OCI-LY7 (cell line): ENCODE measurements at regions of chr17 and their contacts with region 1.

Region 1: GRCh38 chr17:74493381-74493833 is 27.0 kb downstream of the CD300A start:
- DNase-seq: peak; percentile 80
- H3K4me3 ChIP-seq: no peak overlapping the region
- H3K27ac ChIP-seq: no peak overlapping the region
- H3K4me1 ChIP-seq: no peaks in the 10 kb centered on the region
- CTCF ChIP-seq: peak; percentile 99

Region 2: DNA sequence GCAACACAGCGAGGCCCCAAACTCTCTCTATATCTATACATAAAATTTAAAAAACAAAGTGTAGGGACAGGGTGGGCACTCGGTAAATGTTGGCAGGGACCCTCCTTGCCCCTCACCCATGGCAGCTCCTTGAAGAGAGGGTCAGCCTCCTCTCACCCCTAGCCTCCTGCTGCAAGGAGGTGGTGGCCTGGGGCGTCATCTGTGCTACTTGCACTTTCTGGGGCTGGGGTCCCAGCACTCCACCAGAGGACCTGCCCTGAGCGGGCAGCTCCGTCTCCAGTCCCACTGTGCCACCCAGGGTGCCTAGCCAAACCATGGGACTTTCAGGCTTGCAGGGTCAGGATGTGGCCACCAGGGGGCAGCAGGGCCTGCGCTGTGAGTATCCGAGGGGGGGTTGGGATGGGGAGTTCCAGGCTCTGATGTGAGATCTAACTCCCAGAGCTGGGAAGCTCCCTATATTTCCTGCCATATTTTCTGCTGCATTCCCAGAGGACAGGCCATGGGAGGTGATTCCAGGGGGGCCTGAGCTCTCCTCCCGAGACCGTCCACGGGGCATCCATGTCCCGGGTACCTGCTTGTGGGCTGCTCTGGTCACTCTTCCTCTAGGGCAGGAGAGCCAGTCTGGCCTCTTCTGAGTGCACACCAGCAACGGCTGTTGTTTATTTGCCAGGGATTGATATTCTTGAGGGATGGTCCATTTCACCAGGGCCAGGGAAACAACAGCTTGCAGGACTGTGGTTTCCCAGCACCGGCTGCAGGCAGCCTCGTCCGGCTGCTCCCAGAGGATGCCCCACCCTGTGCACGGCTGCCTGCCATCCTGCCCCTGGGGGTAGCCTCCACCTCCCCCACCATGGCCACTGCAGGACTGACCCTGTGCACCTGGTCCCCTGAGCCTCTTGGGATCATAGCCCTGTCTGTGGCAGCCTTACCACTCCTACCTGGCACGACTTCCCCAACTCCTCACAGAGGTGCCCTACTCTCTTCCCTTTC is 125.0 kb before region 1 on chr17:
- CTCF ChIA-PET with region 1: interaction called, 3 read pairs
- POLR2A ChIA-PET with region 1: no interaction called
- intact Hi-C with region 1: loop called (anchors 1 kb)
- DNase-seq: peak; percentile 71
- H3K4me3 ChIP-seq: no peak overlapping the region
- H3K27ac ChIP-seq: no peak overlapping the region
- H3K4me1 ChIP-seq: peaks cover 6% of the 10 kb centered on the region
- CTCF ChIP-seq: peak; percentile 99

Region 3: GRCh38 chr17:74379495-74380085 is 113.8 kb before region 1 on chr17:
- CTCF ChIA-PET with region 1: no interaction called
- POLR2A ChIA-PET with region 1: interaction called, 3 read pairs
- intact Hi-C with region 1: loop called (anchors 1 kb)
- DNase-seq: peak; percentile 88
- H3K4me3 ChIP-seq: no peak overlapping the region
- H3K27ac ChIP-seq: no peak overlapping the region
- H3K4me1 ChIP-seq: peaks cover 7% of the 10 kb centered on the region
- CTCF ChIP-seq: peak; percentile 99

Region 4: GRCh38 chr17:74437702-74438101 is 55.7 kb before region 1 on chr17:
- CTCF ChIA-PET with region 1: no interaction called
- POLR2A ChIA-PET with region 1: no interaction called
- intact Hi-C with region 1: loop called (anchors 1 kb)
- DNase-seq: peak; percentile 69
- H3K4me3 ChIP-seq: no peak overlapping the region
- H3K27ac ChIP-seq: no peak overlapping the region
- H3K4me1 ChIP-seq: peaks cover 6% of the 10 kb centered on the region
- CTCF ChIP-seq: peak; percentile 100

Region 5: GRCh38 chr17:74558882-74559519 is 65.6 kb after region 1 on chr17:
- CTCF ChIA-PET with region 1: no interaction called
- POLR2A ChIA-PET with region 1: no interaction called
- intact Hi-C with region 1: no loop called
- DNase-seq: no peak
- H3K4me3 ChIP-seq: no peak overlapping the region
- H3K27ac ChIP-seq: no peak overlapping the region
- H3K4me1 ChIP-seq: no peaks in the 10 kb centered on the region
- CTCF ChIP-seq: no peak